Aorta (tissue), 5 donors: ENCODE measurements at regions of chr12 and their contacts with region 1.

Region 1: DNA sequence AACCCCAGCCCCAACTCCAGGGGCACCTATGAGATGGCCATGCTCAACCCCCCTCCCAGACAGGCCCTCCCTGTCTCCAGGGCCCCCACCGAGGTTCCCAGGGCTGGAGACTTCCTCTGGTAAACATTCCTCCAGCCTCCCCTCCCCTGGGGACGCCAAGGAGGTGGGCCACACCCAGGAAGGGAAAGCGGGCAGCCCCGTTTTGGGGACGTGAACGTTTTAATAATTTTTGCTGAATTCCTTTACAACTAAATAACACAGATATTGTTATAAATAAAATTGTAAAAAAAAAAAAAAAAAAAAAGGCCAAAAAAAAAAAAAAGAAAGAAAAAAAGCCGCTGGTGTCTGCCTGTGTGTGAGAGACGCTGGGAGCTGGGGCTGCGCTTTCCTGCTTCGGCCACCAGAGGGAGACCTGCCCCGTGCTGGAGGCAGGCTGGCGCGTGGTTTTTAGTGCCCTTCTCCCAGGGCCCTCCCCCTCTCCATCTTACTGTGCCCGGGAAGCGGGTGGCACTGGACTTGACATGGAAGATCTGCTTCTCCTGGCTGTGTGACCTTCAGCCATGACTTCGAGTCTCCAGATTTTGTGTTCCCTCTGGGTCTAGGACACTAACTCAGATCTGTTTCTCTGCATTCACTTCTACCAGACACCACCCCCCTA is 3.4 kb upstream of the NXPH4 start:
- DNase-seq: peak; percentile 93 to 96
- ATAC-seq: peak; percentile 92
- H3K4me3 ChIP-seq: no peak overlapping the region
- H3K27ac ChIP-seq: no peak overlapping the region
- H3K4me1 ChIP-seq: no peaks in the 10 kb centered on the region
- H3K27me3 ChIP-seq: no peaks in the 10 kb centered on the region

Region 2: DNA sequence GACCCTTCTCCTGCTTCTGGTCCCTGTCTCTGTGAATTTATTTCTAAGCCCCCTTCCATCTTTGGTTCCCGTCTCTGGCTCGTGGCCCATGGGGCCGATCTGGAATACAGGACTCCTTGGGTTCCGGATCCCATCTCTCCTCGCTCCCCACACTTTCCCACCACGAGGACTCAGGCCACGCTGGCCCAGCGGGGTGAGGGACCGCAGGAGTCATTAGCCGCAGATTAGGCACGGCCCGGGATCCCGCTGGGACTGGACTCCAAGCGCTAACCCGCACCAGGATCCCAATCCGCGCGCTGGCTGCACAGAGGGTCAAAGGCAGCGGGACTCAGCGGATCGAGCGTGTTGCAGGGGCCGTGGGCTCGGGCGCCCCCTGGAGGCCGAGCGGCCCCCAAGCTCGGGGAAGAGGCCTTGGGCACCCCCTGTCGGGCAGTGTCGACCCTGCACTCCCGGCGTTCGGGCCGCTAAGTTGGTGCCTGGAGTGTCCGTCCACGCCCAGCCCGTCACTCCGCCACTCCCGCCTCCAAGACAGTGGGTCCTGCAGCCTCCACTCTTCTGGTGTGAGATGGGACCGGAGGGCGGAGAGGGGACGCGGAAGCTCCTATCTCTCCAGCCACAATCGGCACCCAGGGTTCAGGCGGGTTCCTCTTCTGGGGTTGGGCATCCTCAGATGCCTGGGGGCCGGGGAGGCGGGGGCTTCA is 25.8 kb after region 1 on chr12:
- intact Hi-C with region 1: loop called (anchors 1 kb)
- DNase-seq: peak; percentile 91 to 97
- ATAC-seq: peak; percentile 91
- H3K4me3 ChIP-seq: peak overlapping the region; percentile 8 to 22
- H3K27ac ChIP-seq: no peak overlapping the region
- H3K4me1 ChIP-seq: no peaks in the 10 kb centered on the region
- H3K27me3 ChIP-seq: no peaks in the 10 kb centered on the region

Region 3: GRCh38 chr12:57280211-57281062 is 67.2 kb after region 1 on chr12:
- intact Hi-C with region 1: no loop called
- DNase-seq: peak in 1 of 2 donors; percentile 55
- ATAC-seq: peak; percentile 36
- H3K4me3 ChIP-seq: no peak overlapping the region
- H3K27ac ChIP-seq: no peak overlapping the region
- H3K4me1 ChIP-seq: no peaks in the 10 kb centered on the region
- H3K27me3 ChIP-seq: no peaks in the 10 kb centered on the region

Region 4: GRCh38 chr12:57342207-57342691 is 129.1 kb after region 1 on chr12:
- intact Hi-C with region 1: no loop called
- DNase-seq: peak in 1 of 2 donors; percentile 49
- ATAC-seq: peak; percentile 63
- H3K4me3 ChIP-seq: no peak overlapping the region
- H3K27ac ChIP-seq: no peak overlapping the region
- H3K4me1 ChIP-seq: peaks cover 0 to 4% of the 10 kb centered on the region in 2 donors
- H3K27me3 ChIP-seq: no peaks in the 10 kb centered on the region